Mammary epithelial cell (primary cell): ENCODE measurements at regions of chr22 and their contacts with region 1.

Region 1: GRCh38 chr22:30830907-30831306 is 136.2 kb downstream of the OSBP2 start:
- DNase-seq: peak; percentile 97
- H3K4me3 ChIP-seq: no peak overlapping the region
- H3K27ac ChIP-seq: peak overlapping the region; percentile 99
- H3K4me1 ChIP-seq: peaks cover 27% of the 10 kb centered on the region
- H3K27me3 ChIP-seq: no peaks in the 10 kb centered on the region
- CTCF ChIP-seq: no peak

Region 2: GRCh38 chr22:30485362-30485988 is 345.4 kb before region 1 on chr22:
- CTCF ChIA-PET with region 1: no interaction called
- dilution Hi-C with region 1: no loop called
- in situ Hi-C with region 1: no loop called
- intact Hi-C with region 1: no loop called
- DNase-seq: peak; percentile 35
- H3K4me3 ChIP-seq: no peak overlapping the region
- H3K27ac ChIP-seq: no peak overlapping the region
- H3K4me1 ChIP-seq: no peaks in the 10 kb centered on the region
- H3K27me3 ChIP-seq: no peaks in the 10 kb centered on the region
- CTCF ChIP-seq: peak; percentile 83 to 90

Region 3: DNA sequence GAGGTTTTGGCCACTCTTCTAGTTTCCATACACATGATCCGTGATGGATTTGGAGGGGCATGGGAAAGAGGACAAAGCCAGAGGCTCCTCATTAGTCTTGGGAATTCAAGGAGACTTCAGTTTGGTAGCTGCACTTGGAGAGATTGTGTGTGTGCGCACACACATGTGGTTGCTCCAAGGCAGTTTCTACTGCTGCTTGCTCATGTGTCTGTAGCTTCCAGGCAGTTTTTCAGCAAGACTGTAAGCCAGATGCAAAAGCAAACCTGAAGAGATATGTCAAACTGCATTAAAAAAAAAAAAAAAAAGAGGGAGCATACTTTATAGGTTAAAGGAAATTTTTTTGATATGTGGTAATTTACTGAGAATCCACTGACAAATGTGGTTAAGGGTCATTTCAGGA is 40.5 kb before region 1 on chr22:
- CTCF ChIA-PET with region 1: no interaction called
- dilution Hi-C with region 1: no loop called
- in situ Hi-C with region 1: no loop called
- intact Hi-C with region 1: no loop called
- DNase-seq: no peak
- H3K4me3 ChIP-seq: no peak overlapping the region
- H3K27ac ChIP-seq: no peak overlapping the region
- H3K4me1 ChIP-seq: no peaks in the 10 kb centered on the region
- H3K27me3 ChIP-seq: no peaks in the 10 kb centered on the region
- CTCF ChIP-seq: no peak

Region 4: GRCh38 chr22:30802202-30803166 is 28.4 kb before region 1 on chr22:
- CTCF ChIA-PET with region 1: no interaction called
- dilution Hi-C with region 1: no loop called
- in situ Hi-C with region 1: no loop called
- intact Hi-C with region 1: loop called (anchors 1 kb)
- DNase-seq: peak; percentile 95
- H3K4me3 ChIP-seq: peak overlapping the region; percentile 51 to 57 (median 55)
- H3K27ac ChIP-seq: no peak overlapping the region
- H3K4me1 ChIP-seq: peaks cover 33% of the 10 kb centered on the region
- H3K27me3 ChIP-seq: no peaks in the 10 kb centered on the region
- CTCF ChIP-seq: peak in 1 of 2 donors; percentile 38

Region 5: DNA sequence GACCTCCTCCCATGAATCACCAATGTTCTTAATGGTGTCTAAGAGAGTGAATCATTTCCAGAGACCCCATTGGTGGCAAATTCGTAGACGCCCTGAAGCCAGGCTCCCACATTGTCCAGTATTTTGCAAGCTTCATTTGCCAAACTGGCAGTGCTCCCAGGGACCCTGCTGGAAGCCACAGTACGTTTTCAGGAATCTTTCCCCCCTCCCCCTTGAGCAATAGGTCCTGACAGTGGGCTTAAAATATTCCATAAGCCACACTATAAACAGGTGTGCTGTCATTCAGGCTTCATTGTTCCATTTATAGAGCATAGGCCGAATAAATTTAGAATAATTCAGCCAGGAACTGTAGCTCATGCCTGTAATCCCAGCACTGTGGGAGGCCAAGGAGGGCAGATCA is 12.3 kb after region 1 on chr22:
- CTCF ChIA-PET with region 1: no interaction called
- dilution Hi-C with region 1: no loop called
- in situ Hi-C with region 1: no loop called
- intact Hi-C with region 1: loop called (anchors 1 kb)
- DNase-seq: no peak
- H3K4me3 ChIP-seq: no peak overlapping the region
- H3K27ac ChIP-seq: no peak overlapping the region
- H3K4me1 ChIP-seq: peaks cover 26% of the 10 kb centered on the region
- H3K27me3 ChIP-seq: no peaks in the 10 kb centered on the region
- CTCF ChIP-seq: no peak

Region 6: GRCh38 chr22:30856741-30857502 is 26.0 kb after region 1 on chr22:
- CTCF ChIA-PET with region 1: no interaction called
- dilution Hi-C with region 1: no loop called
- in situ Hi-C with region 1: no loop called
- intact Hi-C with region 1: loop called (anchors 2 kb)
- DNase-seq: no peak
- H3K4me3 ChIP-seq: no peak overlapping the region
- H3K27ac ChIP-seq: no peak overlapping the region
- H3K4me1 ChIP-seq: no peaks in the 10 kb centered on the region
- H3K27me3 ChIP-seq: no peaks in the 10 kb centered on the region
- CTCF ChIP-seq: no peak

Region 7: GRCh38 chr22:30931541-30932300 is 100.8 kb after region 1 on chr22:
- CTCF ChIA-PET with region 1: no interaction called
- dilution Hi-C with region 1: loop called (anchors 5 kb)
- in situ Hi-C with region 1: no loop called
- intact Hi-C with region 1: no loop called
- DNase-seq: no peak
- H3K4me3 ChIP-seq: no peak overlapping the region
- H3K27ac ChIP-seq: no peak overlapping the region
- H3K4me1 ChIP-seq: no peaks in the 10 kb centered on the region
- H3K27me3 ChIP-seq: no peaks in the 10 kb centered on the region
- CTCF ChIP-seq: no peak